CD8-positive, alpha-beta memory T cell (primary cell): ENCODE measurements at regions of chr17 and their contacts with region 1.

Region 1: DNA sequence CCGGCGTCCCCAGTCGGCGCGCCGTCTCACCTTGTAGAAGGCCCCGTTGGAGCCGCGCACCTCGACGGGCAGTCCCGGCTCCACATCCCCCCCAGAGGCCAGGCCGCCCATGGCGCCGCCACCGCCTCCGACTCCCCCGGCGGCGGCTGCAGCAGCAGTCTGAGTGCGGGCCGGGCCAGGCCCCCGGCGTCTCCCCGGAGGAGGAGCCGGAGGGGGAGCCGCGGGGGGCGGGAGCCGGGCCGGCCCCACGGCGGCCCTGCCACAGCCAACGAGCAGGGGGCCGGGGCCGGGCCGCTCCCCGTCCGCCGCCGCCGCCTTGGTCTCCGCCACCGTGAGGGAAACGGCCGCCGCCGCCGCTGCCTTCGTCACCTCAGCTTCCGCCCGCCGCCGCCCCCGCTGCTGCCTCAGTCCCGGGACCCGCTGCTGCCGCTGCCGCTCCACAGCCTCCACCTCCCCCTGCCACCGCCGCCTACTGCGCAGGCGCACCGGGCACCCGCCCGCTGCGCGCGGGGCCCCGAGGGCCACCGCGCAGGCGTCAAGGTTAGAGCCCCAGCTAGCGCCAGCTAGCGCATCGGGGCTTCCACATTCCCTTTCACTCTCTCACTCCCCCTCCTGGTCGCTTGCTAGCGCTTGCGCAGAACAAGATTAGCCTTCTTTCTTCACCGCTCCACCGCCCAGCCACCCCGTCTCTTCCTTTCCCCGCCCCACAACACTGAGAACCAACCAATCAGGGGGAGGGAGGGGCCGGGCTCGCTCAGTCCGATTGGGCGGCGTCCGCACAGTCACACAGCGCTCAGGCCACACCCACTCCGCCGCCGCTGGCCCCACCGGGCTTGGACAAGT is at the start of gene FXR2:
- DNase-seq: peak; percentile 98 to 99 (median 98)
- H3K4me3 ChIP-seq: peak within 1 kb of the TSS; percentile 93
- H3K4me3 Mint-ChIP-seq: peak within 1 kb of the TSS; percentile 82 to 96 (median 92)
- H3K27ac ChIP-seq: peak within 1 kb of the TSS; percentile 88
- H3K27ac Mint-ChIP-seq: peak within 1 kb of the TSS; percentile 87 to 99 (median 96)
- H3K4me1 ChIP-seq: peaks cover 26% of the 10 kb centered on the region
- H3K4me1 Mint-ChIP-seq: peaks cover 31 to 41% (median 36%) of the 10 kb centered on the region in 3 donors
- H3K27me3 ChIP-seq: no peaks in the 10 kb centered on the region
- H3K27me3 Mint-ChIP-seq: no peaks in the 10 kb centered on the region
- total RNA-seq, gene FXR2: 45.7 to 45.9 TPM

Region 2: GRCh38 chr17:7496470-7497183 is 118.0 kb before region 1 on chr17:
- CTCF ChIA-PET with region 1: no interaction called
- POLR2A ChIA-PET with region 1: no interaction called
- DNase-seq: no peak
- H3K4me3 ChIP-seq: no peak overlapping the region
- H3K4me3 Mint-ChIP-seq: peak overlapping the region in 2 of 7 donors; percentile 31 to 47
- H3K27ac ChIP-seq: no peak overlapping the region
- H3K27ac Mint-ChIP-seq: peak overlapping the region in 4 of 8 donors; percentile 25 to 77 (median 50)
- H3K4me1 ChIP-seq: peaks cover 9% of the 10 kb centered on the region
- H3K4me1 Mint-ChIP-seq: peaks cover 22 to 35% (median 28%) of the 10 kb centered on the region in 3 donors
- H3K27me3 ChIP-seq: no peaks in the 10 kb centered on the region
- H3K27me3 Mint-ChIP-seq: peaks cover 0 to 5% of the 10 kb centered on the region in 2 donors

Region 3: GRCh38 chr17:7572588-7573323 is 41.9 kb before region 1 on chr17:
- CTCF ChIA-PET with region 1: interaction called, 4 read pairs
- POLR2A ChIA-PET with region 1: interaction called, 12 read pairs
- DNase-seq: peak; percentile 99 to 100 (median 100)
- H3K4me3 ChIP-seq: peak overlapping the region; percentile 98
- H3K4me3 Mint-ChIP-seq: peak overlapping the region; percentile 93 to 98 (median 96)
- H3K27ac ChIP-seq: peak overlapping the region; percentile 99
- H3K27ac Mint-ChIP-seq: peak overlapping the region; percentile 96 to 100 (median 98)
- H3K4me1 ChIP-seq: peaks cover 31% of the 10 kb centered on the region
- H3K4me1 Mint-ChIP-seq: peaks cover 39 to 55% (median 48%) of the 10 kb centered on the region in 3 donors
- H3K27me3 ChIP-seq: no peaks in the 10 kb centered on the region
- H3K27me3 Mint-ChIP-seq: peaks cover 0 to 7% of the 10 kb centered on the region in 2 donors

Region 4: GRCh38 chr17:7627250-7628121 is 12.8 kb after region 1 on chr17 and contains the start of gene SAT2:
- CTCF ChIA-PET with region 1: interaction called, 34 read pairs
- POLR2A ChIA-PET with region 1: interaction called, 31 read pairs
- DNase-seq: peak; percentile 80 to 93 (median 82)
- H3K4me3 ChIP-seq: peak within 1 kb of the TSS; percentile 90
- H3K4me3 Mint-ChIP-seq: peak within 1 kb of the TSS; percentile 90 to 95 (median 93)
- H3K27ac ChIP-seq: peak within 1 kb of the TSS; percentile 69
- H3K27ac Mint-ChIP-seq: peak within 1 kb of the TSS; percentile 70 to 97 (median 91)
- H3K4me1 ChIP-seq: peaks cover 10% of the 10 kb centered on the region
- H3K4me1 Mint-ChIP-seq: peaks cover 12 to 20% (median 13%) of the 10 kb centered on the region in 3 donors
- H3K27me3 ChIP-seq: no peaks in the 10 kb centered on the region
- H3K27me3 Mint-ChIP-seq: no peaks in the 10 kb centered on the region
- total RNA-seq, gene SAT2: 18.4 to 21.6 TPM